CD8-positive, alpha-beta T cell (primary cell): ENCODE measurements at regions of chr15 and their contacts with region 1.

Region 1: GRCh38 chr15:40893733-40894688 is at the start of gene VPS18:
- DNase-seq: peak; percentile 97 to 99 (median 99)
- ATAC-seq: peak; percentile 97
- H3K4me3 ChIP-seq: peak within 1 kb of the TSS; percentile 85 to 98
- H3K4me3 Mint-ChIP-seq: peak within 1 kb of the TSS; percentile 98
- H3K27ac ChIP-seq: peak within 1 kb of the TSS; percentile 76 to 91
- H3K27ac Mint-ChIP-seq: peak within 1 kb of the TSS; percentile 96
- H3K4me1 ChIP-seq: peaks cover 19% of the 10 kb centered on the region
- H3K4me1 Mint-ChIP-seq: peaks cover 40% of the 10 kb centered on the region
- H3K27me3 ChIP-seq: no peaks in the 10 kb centered on the region
- H3K27me3 Mint-ChIP-seq: no peaks in the 10 kb centered on the region
- CTCF ChIP-seq: peak; percentile 88
- total RNA-seq, gene VPS18: 21.7 to 23.6 TPM

Region 2: GRCh38 chr15:40564591-40565332 is 329.2 kb before region 1 on chr15 and contains the start of gene CCDC32:
- CTCF ChIA-PET with region 1: interaction called, 4 read pairs
- POLR2A ChIA-PET with region 1: interaction called, 5 read pairs
- intact Hi-C with region 1: loop called in 1 of 2 experiments (anchors 5 kb)
- DNase-seq: peak; percentile 84 to 99 (median 94)
- ATAC-seq: peak; percentile 90
- H3K4me3 ChIP-seq: peak within 1 kb of the TSS; percentile 89 to 97
- H3K4me3 Mint-ChIP-seq: peak within 1 kb of the TSS; percentile 95
- H3K27ac ChIP-seq: peak within 1 kb of the TSS; percentile 87 to 97
- H3K27ac Mint-ChIP-seq: peak within 1 kb of the TSS; percentile 97
- H3K4me1 ChIP-seq: peaks cover 11% of the 10 kb centered on the region
- H3K4me1 Mint-ChIP-seq: peaks cover 52% of the 10 kb centered on the region
- H3K27me3 ChIP-seq: no peaks in the 10 kb centered on the region
- H3K27me3 Mint-ChIP-seq: no peaks in the 10 kb centered on the region
- CTCF ChIP-seq: no peak
- total RNA-seq, gene CCDC32: 18.3 to 20.3 TPM

Region 3: DNA sequence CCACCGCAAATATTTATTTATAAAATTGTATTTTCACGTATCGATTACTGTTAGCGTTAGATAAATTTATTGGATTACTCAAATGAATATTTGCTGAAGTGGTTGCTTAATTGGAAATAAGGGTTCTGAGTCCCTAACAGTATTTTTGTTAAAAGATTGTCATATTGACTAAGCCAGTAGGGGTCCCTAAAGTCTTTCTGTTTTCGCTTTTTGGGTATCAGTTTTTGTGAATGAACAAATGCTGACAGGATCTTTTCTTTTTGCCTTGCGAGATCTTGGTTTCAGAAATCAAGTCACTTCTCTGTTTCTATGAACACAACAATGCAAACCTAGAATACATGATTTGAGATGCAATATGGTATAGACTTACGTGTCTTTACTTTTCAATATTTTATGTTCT is 191.9 kb before region 1 on chr15:
- CTCF ChIA-PET with region 1: interaction called, 3 read pairs
- POLR2A ChIA-PET with region 1: no interaction called
- intact Hi-C with region 1: loop called (anchors 1 to 2 kb)
- DNase-seq: peak in 2 of 9 experiments; percentile 46 to 59
- ATAC-seq: no peak
- H3K4me3 ChIP-seq: no peak overlapping the region
- H3K4me3 Mint-ChIP-seq: no peak overlapping the region
- H3K27ac ChIP-seq: no peak overlapping the region
- H3K27ac Mint-ChIP-seq: no peak overlapping the region
- H3K4me1 ChIP-seq: no peaks in the 10 kb centered on the region
- H3K4me1 Mint-ChIP-seq: no peaks in the 10 kb centered on the region
- H3K27me3 ChIP-seq: no peaks in the 10 kb centered on the region
- H3K27me3 Mint-ChIP-seq: no peaks in the 10 kb centered on the region
- CTCF ChIP-seq: peak; percentile 38

Region 4: GRCh38 chr15:40873625-40874561 is 20.1 kb before region 1 on chr15 and contains the start of gene RHOV:
- CTCF ChIA-PET with region 1: interaction called, 26 read pairs
- POLR2A ChIA-PET with region 1: interaction called, 6 read pairs
- intact Hi-C with region 1: loop called (anchors 1 to 2 kb)
- DNase-seq: peak in 8 of 9 experiments; percentile 21 to 71 (median 58)
- ATAC-seq: peak; percentile 85
- H3K4me3 ChIP-seq: peak within 1 kb of the TSS; percentile 36 to 59
- H3K4me3 Mint-ChIP-seq: peak within 1 kb of the TSS; percentile 86
- H3K27ac ChIP-seq: no peak within 1 kb of the TSS
- H3K27ac Mint-ChIP-seq: no peak within 1 kb of the TSS
- H3K4me1 ChIP-seq: peaks cover 7% of the 10 kb centered on the region
- H3K4me1 Mint-ChIP-seq: peaks cover 5% of the 10 kb centered on the region
- H3K27me3 ChIP-seq: peaks cover 0 to 12% of the 10 kb centered on the region in 2 experiments
- H3K27me3 Mint-ChIP-seq: peaks cover 14% of the 10 kb centered on the region
- CTCF ChIP-seq: peak; percentile 18
- total RNA-seq, gene RHOV: 0.24 to 0.25 TPM

Region 5: GRCh38 chr15:40952901-40953712 is 59.1 kb after region 1 on chr15 and contains the start of gene CHAC1:
- CTCF ChIA-PET with region 1: no interaction called
- POLR2A ChIA-PET with region 1: interaction called, 3 read pairs
- intact Hi-C with region 1: loop called in 1 of 2 experiments (anchors 1 kb)
- DNase-seq: peak; percentile 84 to 97 (median 94)
- ATAC-seq: peak; percentile 96
- H3K4me3 ChIP-seq: peak within 1 kb of the TSS; percentile 68 to 73
- H3K4me3 Mint-ChIP-seq: peak within 1 kb of the TSS; percentile 93
- H3K27ac ChIP-seq: peak within 1 kb of the TSS in 1 of 2 experiments; percentile 43
- H3K27ac Mint-ChIP-seq: peak within 1 kb of the TSS; percentile 73
- H3K4me1 ChIP-seq: peaks cover 12% of the 10 kb centered on the region
- H3K4me1 Mint-ChIP-seq: peaks cover 16% of the 10 kb centered on the region
- H3K27me3 ChIP-seq: no peaks in the 10 kb centered on the region
- H3K27me3 Mint-ChIP-seq: no peaks in the 10 kb centered on the region
- CTCF ChIP-seq: peak; percentile 20
- total RNA-seq, gene CHAC1: 0.22 to 0.69 TPM

Region 6: GRCh38 chr15:40974879-40975278 is 80.9 kb after region 1 on chr15:
- CTCF ChIA-PET with region 1: no interaction called
- POLR2A ChIA-PET with region 1: no interaction called
- intact Hi-C with region 1: no loop called
- DNase-seq: no peak
- ATAC-seq: no peak
- H3K4me3 ChIP-seq: no peak overlapping the region
- H3K4me3 Mint-ChIP-seq: no peak overlapping the region
- H3K27ac ChIP-seq: no peak overlapping the region
- H3K27ac Mint-ChIP-seq: no peak overlapping the region
- H3K4me1 ChIP-seq: peaks cover 4% of the 10 kb centered on the region
- H3K4me1 Mint-ChIP-seq: peaks cover 4% of the 10 kb centered on the region
- H3K27me3 ChIP-seq: no peaks in the 10 kb centered on the region
- H3K27me3 Mint-ChIP-seq: no peaks in the 10 kb centered on the region
- CTCF ChIP-seq: no peak

Region 7: GRCh38 chr15:41416742-41417406 is 522.9 kb after region 1 on chr15 and contains the start of gene RTF1:
- CTCF ChIA-PET with region 1: no interaction called
- POLR2A ChIA-PET with region 1: no interaction called
- intact Hi-C with region 1: loop called in 1 of 2 experiments (anchors 10 kb)
- DNase-seq: peak; percentile 94 to 99 (median 98)
- ATAC-seq: peak; percentile 98
- H3K4me3 ChIP-seq: peak within 1 kb of the TSS; percentile 79 to 91
- H3K4me3 Mint-ChIP-seq: peak within 1 kb of the TSS; percentile 93
- H3K27ac ChIP-seq: peak within 1 kb of the TSS; percentile 64 to 76
- H3K27ac Mint-ChIP-seq: peak within 1 kb of the TSS; percentile 94
- H3K4me1 ChIP-seq: peaks cover 30% of the 10 kb centered on the region
- H3K4me1 Mint-ChIP-seq: peaks cover 43% of the 10 kb centered on the region
- H3K27me3 ChIP-seq: no peaks in the 10 kb centered on the region
- H3K27me3 Mint-ChIP-seq: no peaks in the 10 kb centered on the region
- CTCF ChIP-seq: no peak
- total RNA-seq, gene RTF1: 33.2 to 41.6 TPM